Gastrocnemius medialis (tissue), 4 donors: ENCODE measurements at regions of chr1 and their contacts with region 1.

Region 1: DNA sequence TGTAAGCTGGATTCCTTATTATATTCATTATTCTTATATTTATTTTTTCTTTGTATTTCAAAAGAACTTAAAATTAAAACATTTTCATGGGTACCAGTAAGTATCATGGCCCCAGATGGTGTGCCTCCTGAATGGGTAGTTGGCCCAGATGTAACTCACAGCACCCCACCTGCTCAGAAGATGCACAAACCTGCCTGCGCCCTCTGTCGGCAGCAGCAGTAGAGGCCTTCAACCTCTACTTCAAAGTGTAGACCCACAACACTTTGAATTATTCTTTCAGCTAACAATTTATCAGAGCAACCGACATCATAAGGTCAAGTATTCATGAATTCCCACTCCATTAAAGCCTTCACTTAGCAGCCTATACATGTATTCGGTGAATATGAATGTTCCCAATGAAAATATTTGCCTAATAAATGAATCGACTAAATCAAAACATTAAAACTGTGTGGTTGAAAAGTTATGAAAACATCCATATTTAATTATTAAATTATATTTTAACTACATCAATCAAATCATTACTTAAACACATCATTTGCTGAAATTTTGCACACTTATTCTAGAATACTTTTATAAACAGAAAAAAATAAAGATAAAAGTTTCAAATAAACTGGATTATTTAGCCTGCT is 25.4 kb downstream of the PIGM start:
- DNase-seq: peak in 1 of 2 donors; percentile 23
- ATAC-seq: no peak
- H3K4me3 ChIP-seq: no peak overlapping the region
- H3K27ac ChIP-seq: no peak overlapping the region
- H3K4me1 ChIP-seq: no peaks in the 10 kb centered on the region
- H3K27me3 ChIP-seq: no peaks in the 10 kb centered on the region
- CTCF ChIP-seq: peak; percentile 11 to 66 (median 30)
- POLR2A ChIP-seq: no peak

Region 2: GRCh38 chr1:159936273-159936904 is 70.0 kb before region 1 on chr1:
- in situ Hi-C with region 1: loop called (anchors 5 to 10 kb)
- intact Hi-C with region 1: loop called (anchors 1 kb)
- DNase-seq: peak in 1 of 2 donors; percentile 43
- ATAC-seq: peak in 1 of 2 donors; percentile 76
- H3K4me3 ChIP-seq: no peak overlapping the region
- H3K27ac ChIP-seq: no peak overlapping the region
- H3K4me1 ChIP-seq: no peaks in the 10 kb centered on the region
- H3K27me3 ChIP-seq: no peaks in the 10 kb centered on the region
- CTCF ChIP-seq: peak; percentile 82 to 97 (median 95)
- POLR2A ChIP-seq: no peak

Region 3: GRCh38 chr1:159945483-159946241 is 60.8 kb before region 1 on chr1 and contains the start of gene IGSF9:
- in situ Hi-C with region 1: loop called in 1 of 4 experiments (anchors 10 kb)
- intact Hi-C with region 1: no loop called
- DNase-seq: no peak
- ATAC-seq: peak; percentile 63 to 66
- H3K4me3 ChIP-seq: peak within 1 kb of the TSS; percentile 45 to 62 (median 50)
- H3K27ac ChIP-seq: no peak within 1 kb of the TSS
- H3K4me1 ChIP-seq: peaks cover 0 to 15% of the 10 kb centered on the region in 2 donors
- H3K27me3 ChIP-seq: peaks cover 24 to 27% (median 24%) of the 10 kb centered on the region in 3 donors
- CTCF ChIP-seq: peak; percentile 7 to 64 (median 48)
- POLR2A ChIP-seq: no peak
- total RNA-seq, gene IGSF9: 0.10 to 0.11 TPM in 2 of 4 donors, not detected in the others